ENCODE measurements at regions of chr7 and their contacts with region 1.

Region 1: DNA sequence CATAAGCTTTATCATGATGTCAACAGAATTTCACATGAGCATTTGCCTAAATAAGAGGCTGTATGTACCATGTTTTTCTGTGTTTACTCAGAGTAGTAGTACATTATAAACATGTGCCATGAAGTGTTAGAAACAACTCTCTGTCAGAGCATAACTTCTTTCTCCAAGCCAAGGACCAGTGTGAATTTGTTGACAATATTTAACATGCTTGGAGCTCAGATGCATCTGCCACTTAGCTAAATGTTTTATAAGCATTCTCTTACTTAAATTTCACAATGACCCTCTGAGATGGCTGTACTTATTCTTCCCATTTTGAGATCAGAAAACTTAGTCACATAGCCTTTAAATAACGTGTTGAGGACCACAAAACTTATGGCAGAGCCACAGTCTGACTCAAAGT is 105.0 kb downstream of the SEMA3D start:
- DNase-seq: no peak
- ATAC-seq: no peak
- H3K4me3 ChIP-seq: no peak overlapping the region
- H3K27ac ChIP-seq: no peak overlapping the region
- H3K4me1 ChIP-seq: no peaks in the 10 kb centered on the region
- H3K27me3 ChIP-seq: no peaks in the 10 kb centered on the region
- CTCF ChIP-seq: no peak
- POLR2A ChIP-seq: no peak
- RAD21 ChIP-seq: no peak

Region 2: GRCh38 chr7:85068799-85069198 is 13.0 kb before region 1 on chr7:
- CTCF ChIA-PET with region 1: no interaction called
- POLR2A ChIA-PET with region 1: no interaction called
- dilution Hi-C with region 1: no loop called
- in situ Hi-C with region 1: no loop called
- intact Hi-C with region 1: no loop called
- DNase-seq: peak; percentile 83
- ATAC-seq: peak; percentile 67
- H3K4me3 ChIP-seq: no peak overlapping the region
- H3K27ac ChIP-seq: no peak overlapping the region
- H3K4me1 ChIP-seq: peaks cover 10% of the 10 kb centered on the region
- H3K27me3 ChIP-seq: no peaks in the 10 kb centered on the region
- CTCF ChIP-seq: no peak
- POLR2A ChIP-seq: no peak
- RAD21 ChIP-seq: no peak

Region 3: DNA sequence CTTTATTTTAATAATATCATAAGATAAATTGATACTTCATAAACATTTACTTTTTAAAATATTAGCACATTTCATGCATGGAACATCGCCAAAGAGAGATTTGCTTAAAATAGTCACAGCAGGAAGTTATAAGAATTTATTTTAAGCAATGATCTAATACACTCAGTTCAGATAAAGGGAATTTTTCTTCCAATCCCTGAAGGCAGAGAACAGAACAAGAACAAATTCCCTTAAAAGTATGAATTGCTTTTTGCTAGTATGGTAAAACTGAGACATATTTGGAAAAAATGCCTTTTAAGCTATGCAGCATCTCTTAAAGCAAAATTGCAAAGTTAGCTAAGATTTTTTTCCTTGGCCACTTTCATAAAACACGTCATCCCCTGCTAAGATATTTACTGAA is 14.0 kb after region 1 on chr7:
- CTCF ChIA-PET with region 1: no interaction called
- POLR2A ChIA-PET with region 1: no interaction called
- dilution Hi-C with region 1: no loop called
- in situ Hi-C with region 1: no loop called
- intact Hi-C with region 1: loop called (anchors 2 kb)
- DNase-seq: peak; percentile 40
- ATAC-seq: no peak
- H3K4me3 ChIP-seq: no peak overlapping the region
- H3K27ac ChIP-seq: no peak overlapping the region
- H3K4me1 ChIP-seq: no peaks in the 10 kb centered on the region
- H3K27me3 ChIP-seq: no peaks in the 10 kb centered on the region
- CTCF ChIP-seq: no peak
- POLR2A ChIP-seq: no peak
- RAD21 ChIP-seq: no peak